Body of pancreas (tissue), 4 donors: ENCODE measurements at regions of chr5 and their contacts with region 1.

Region 1: DNA sequence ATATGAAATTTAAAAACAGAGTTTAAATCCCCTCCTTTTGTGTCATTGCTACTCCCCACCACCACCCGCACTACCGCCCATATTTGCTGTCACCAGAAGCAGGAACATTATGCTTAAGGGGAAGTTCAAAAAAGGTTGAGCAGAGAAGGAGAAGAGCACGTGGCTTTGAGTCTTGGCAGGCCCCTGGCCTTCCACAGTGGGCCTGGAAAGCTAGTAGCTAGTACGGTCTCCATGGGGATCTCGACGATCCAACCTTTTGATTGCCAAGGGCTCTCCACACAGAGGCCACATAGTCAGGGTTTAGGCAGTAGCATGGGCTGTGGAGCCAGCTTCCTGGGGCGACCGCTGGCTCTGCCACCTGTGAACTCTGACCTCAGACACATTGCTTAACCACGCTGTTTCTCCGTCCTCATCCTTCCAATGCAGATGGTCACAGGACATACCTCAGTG is 90.1 kb downstream of the GOLPH3 start:
- DNase-seq: no peak
- ATAC-seq: no peak
- H3K4me3 ChIP-seq: no peak overlapping the region
- H3K27ac ChIP-seq: no peak overlapping the region
- H3K4me1 ChIP-seq: no peaks in the 10 kb centered on the region
- H3K27me3 ChIP-seq: no peaks in the 10 kb centered on the region
- CTCF ChIP-seq: no peak
- POLR2A ChIP-seq: no peak

Region 2: DNA sequence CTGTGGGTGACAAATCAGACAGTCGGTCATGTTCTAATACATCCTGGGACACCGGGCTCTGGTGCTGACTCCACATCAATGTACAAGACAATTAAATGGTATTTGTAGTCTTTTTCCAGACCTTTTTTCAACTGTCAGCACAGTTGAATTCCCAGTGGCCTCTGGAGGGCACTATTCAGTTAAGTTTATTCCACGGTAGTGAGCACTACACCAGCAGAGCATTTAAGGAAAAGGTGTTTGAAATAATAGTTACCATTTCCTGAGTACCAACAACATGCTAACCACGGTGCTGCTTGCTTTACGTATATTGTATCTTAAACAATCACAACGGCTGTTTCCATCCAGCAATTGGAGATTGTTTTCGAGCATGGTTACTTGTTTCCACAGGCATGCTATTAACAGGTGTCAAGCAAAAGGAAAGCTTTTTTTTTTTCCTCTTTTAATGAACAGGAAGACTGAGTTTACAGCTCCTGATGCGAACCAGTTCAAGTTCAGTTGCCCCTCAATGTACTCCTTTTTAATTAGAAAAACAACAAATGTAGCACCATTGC is 258.4 kb before region 1 on chr5:
- intact Hi-C with region 1: loop called (anchors 10 kb)
- DNase-seq: peak; percentile 41 to 62 (median 54)
- ATAC-seq: no peak
- H3K4me3 ChIP-seq: no peak overlapping the region
- H3K27ac ChIP-seq: no peak overlapping the region
- H3K4me1 ChIP-seq: no peaks in the 10 kb centered on the region
- H3K27me3 ChIP-seq: no peaks in the 10 kb centered on the region
- CTCF ChIP-seq: peak in 6 of 7 experiments; percentile 60 to 80 (median 62)
- POLR2A ChIP-seq: no peak